ENCODE measurements at regions of chr9 and their contacts with region 1.

Region 1: DNA sequence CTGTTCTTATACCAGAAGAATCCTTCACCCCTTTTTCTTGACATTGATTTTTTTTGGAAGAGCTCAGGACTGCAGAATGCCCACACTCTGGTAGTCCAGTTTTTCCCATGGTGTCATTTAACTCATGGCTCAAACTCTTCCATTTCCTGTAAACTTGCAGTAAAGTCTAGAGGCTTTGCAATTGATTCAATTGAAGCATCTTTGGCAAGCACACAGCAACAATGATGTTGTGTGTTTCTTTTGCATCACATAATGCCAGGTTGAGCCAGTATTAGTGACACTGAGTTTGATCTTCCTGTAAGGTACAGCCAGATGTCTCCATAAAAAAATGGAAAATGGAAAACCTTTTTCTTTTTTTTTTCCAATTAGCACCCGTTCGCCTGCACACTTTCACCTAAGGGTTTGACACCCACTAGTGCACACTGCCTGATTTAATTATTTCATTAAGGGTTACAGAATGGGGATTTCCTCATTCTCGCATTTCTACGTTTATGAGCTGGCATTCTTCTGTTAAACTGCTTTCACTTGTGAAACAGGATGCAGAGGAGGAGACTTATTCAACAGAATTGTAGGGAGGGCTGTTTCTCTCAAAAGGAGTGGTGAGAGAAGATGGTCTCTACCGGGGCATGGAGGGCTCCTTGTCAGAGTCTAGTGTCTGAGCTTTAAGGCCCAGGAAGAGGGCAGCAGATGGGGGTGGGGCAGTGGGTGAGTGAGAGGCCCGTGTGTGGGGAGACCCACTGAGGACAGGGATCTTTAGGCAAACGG is 2.3 kb upstream of the S1PR3 start:
- DNase-seq: peak; percentile 38
- H3K4me3 Mint-ChIP-seq: peak overlapping the region; percentile 8
- H3K27ac Mint-ChIP-seq: peak overlapping the region; percentile 32
- H3K4me1 Mint-ChIP-seq: peaks cover 50% of the 10 kb centered on the region
- H3K27me3 Mint-ChIP-seq: peaks cover 30% of the 10 kb centered on the region

Region 2: DNA sequence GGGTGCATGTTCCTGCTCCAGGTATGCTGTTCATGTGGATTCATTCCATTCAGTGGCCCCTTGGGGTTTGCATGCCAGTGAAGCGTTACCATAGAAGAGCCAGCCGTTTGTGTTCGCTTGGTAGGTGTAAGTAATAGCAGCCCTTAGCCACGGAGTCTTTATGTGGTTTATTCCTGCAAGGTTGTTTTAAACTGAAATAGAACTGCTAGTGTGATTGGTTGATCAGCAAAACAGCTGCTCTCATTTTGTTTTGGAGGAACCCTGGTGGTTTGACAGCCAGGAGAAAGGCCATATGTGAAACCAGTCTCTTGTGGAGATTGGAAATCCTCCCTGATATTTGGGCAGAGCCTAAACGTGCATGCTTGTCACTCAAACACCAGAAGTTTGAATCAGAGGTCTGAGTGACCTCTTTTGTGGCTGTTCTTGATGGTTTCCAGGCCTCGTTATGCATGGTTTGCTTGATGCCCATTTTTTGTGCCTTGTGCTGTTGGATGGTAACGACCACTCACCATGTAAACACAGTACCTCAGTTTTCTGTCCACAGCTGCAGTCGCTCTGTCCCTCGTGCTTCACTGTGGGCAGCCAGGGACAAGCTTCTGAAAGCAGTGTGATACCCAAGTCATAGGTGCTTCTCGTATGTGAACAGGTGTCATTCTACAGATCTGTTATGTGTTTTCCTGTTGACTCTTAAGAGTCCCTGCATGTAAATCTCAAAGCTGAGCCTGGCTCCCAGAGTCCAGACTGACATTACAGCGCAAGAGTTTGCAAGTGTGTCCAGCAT is 512.3 kb before region 1 on chr9:
- CTCF ChIA-PET with region 1: no interaction called
- intact Hi-C with region 1: loop called (anchors 5 kb)
- DNase-seq: peak; percentile 7
- H3K4me3 Mint-ChIP-seq: no peak overlapping the region
- H3K27ac Mint-ChIP-seq: no peak overlapping the region
- H3K4me1 Mint-ChIP-seq: peaks cover 18% of the 10 kb centered on the region
- H3K27me3 Mint-ChIP-seq: no peaks in the 10 kb centered on the region

Region 3: DNA sequence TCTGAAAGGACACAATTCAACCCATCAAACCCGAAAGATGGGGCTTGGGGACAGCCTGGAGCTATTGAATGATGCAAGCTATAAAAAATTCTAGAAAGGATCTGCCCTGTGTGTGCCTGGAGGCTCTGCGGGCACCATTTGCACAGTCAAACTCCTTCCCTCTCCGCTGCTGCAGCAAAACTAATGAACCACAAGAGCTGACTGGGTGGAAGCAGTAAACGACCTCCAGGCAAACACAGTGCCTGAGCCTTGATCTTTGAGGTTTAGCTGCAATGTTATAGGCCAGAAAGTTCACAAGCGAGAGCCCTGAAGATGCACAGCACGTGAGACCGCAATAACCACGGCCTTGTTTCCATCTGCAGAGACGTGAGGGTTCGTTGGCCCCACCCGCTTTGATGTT is 66.9 kb before region 1 on chr9:
- CTCF ChIA-PET with region 1: no interaction called
- intact Hi-C with region 1: loop called (anchors 2 kb)
- DNase-seq: peak; percentile 71
- H3K4me3 Mint-ChIP-seq: no peak overlapping the region
- H3K27ac Mint-ChIP-seq: no peak overlapping the region
- H3K4me1 Mint-ChIP-seq: peaks cover 44% of the 10 kb centered on the region
- H3K27me3 Mint-ChIP-seq: peaks cover 3% of the 10 kb centered on the region

Region 4: GRCh38 chr9:88973281-88974152 is 15.5 kb before region 1 on chr9:
- CTCF ChIA-PET with region 1: interaction called, 4 read pairs
- intact Hi-C with region 1: loop called (anchors 2 kb)
- DNase-seq: no peak
- H3K4me3 Mint-ChIP-seq: no peak overlapping the region
- H3K27ac Mint-ChIP-seq: no peak overlapping the region
- H3K4me1 Mint-ChIP-seq: peaks cover 10% of the 10 kb centered on the region
- H3K27me3 Mint-ChIP-seq: peaks cover 7% of the 10 kb centered on the region

Region 5: GRCh38 chr9:89278997-89279739 is 290.2 kb after region 1 on chr9:
- CTCF ChIA-PET with region 1: no interaction called
- intact Hi-C with region 1: loop called (anchors 5 kb)
- DNase-seq: peak; percentile 38
- H3K4me3 Mint-ChIP-seq: no peak overlapping the region
- H3K27ac Mint-ChIP-seq: no peak overlapping the region
- H3K4me1 Mint-ChIP-seq: peaks cover 41% of the 10 kb centered on the region
- H3K27me3 Mint-ChIP-seq: peaks cover 1% of the 10 kb centered on the region